Endothelial cell of umbilical vein (primary cell): ENCODE measurements at regions of chr5 and their contacts with region 1.

Region 1: GRCh38 chr5:144352330-144352729 is 181.7 kb downstream of the KCTD16 start:
- DNase-seq: no peak
- H3K4me3 ChIP-seq: no peak overlapping the region
- H3K27ac ChIP-seq: no peak overlapping the region
- H3K4me1 ChIP-seq: no peaks in the 10 kb centered on the region
- H3K27me3 ChIP-seq: no peaks in the 10 kb centered on the region
- CTCF ChIP-seq: no peak
- POLR2A ChIP-seq: no peak

Region 2: GRCh38 chr5:143543358-143544255 is 808.7 kb before region 1 on chr5:
- CTCF ChIA-PET with region 1: no interaction called
- POLR2A ChIA-PET with region 1: no interaction called
- dilution Hi-C with region 1: no loop called
- intact Hi-C with region 1: loop called (anchors 5 kb)
- DNase-seq: no peak
- H3K4me3 ChIP-seq: no peak overlapping the region
- H3K27ac ChIP-seq: no peak overlapping the region
- H3K4me1 ChIP-seq: no peaks in the 10 kb centered on the region
- H3K27me3 ChIP-seq: no peaks in the 10 kb centered on the region
- CTCF ChIP-seq: no peak
- POLR2A ChIP-seq: no peak